Gastrocnemius medialis (tissue), 4 donors: ENCODE measurements at regions of chr18 and their contacts with region 1.

Region 1: GRCh38 chr18:37537868-37538525 is 27.6 kb downstream of the CELF4 start:
- DNase-seq: peak; percentile 15 to 36
- ATAC-seq: peak in 1 of 2 donors; percentile 71
- H3K4me3 ChIP-seq: no peak overlapping the region
- H3K27ac ChIP-seq: no peak overlapping the region
- H3K4me1 ChIP-seq: peaks cover 0 to 4% of the 10 kb centered on the region in 2 donors
- H3K27me3 ChIP-seq: peaks cover 12 to 18% (median 13%) of the 10 kb centered on the region in 3 donors
- CTCF ChIP-seq: peak; percentile 37 to 83 (median 68)
- POLR2A ChIP-seq: no peak

Region 2: GRCh38 chr18:37335409-37335736 is 202.6 kb before region 1 on chr18:
- in situ Hi-C with region 1: loop called in 1 of 4 experiments (anchors 25 kb)
- intact Hi-C with region 1: loop called (anchors 5 kb)
- DNase-seq: no peak
- ATAC-seq: no peak
- H3K4me3 ChIP-seq: no peak overlapping the region
- H3K27ac ChIP-seq: no peak overlapping the region
- H3K4me1 ChIP-seq: no peaks in the 10 kb centered on the region
- H3K27me3 ChIP-seq: no peaks in the 10 kb centered on the region
- CTCF ChIP-seq: no peak
- POLR2A ChIP-seq: no peak

Region 3: DNA sequence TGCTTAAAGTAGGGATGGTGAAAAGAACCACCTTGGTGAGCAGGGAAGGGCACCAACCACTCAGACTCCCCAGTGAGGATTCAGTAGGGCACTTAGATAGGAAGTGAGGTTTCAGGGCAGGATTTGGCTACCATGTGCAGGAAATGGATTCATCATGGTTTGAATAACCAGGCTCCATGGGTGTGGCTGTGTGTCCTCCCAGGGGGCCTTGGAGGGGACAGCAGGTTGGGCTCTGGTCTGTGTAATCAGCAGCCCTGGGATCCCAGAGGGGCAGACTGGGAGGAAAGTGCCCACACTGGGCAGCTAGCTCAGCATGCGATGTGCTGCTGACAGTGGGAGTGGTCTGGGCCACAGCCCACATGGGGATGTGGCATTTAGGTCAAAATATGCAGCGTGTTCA is 197.0 kb before region 1 on chr18:
- in situ Hi-C with region 1: loop called in 1 of 4 experiments (anchors 25 kb)
- intact Hi-C with region 1: loop called (anchors 5 kb)
- DNase-seq: no peak
- ATAC-seq: no peak
- H3K4me3 ChIP-seq: no peak overlapping the region
- H3K27ac ChIP-seq: no peak overlapping the region
- H3K4me1 ChIP-seq: no peaks in the 10 kb centered on the region
- H3K27me3 ChIP-seq: peaks cover 2 to 6% (median 5%) of the 10 kb centered on the region in 3 donors
- CTCF ChIP-seq: no peak
- POLR2A ChIP-seq: no peak

Region 4: DNA sequence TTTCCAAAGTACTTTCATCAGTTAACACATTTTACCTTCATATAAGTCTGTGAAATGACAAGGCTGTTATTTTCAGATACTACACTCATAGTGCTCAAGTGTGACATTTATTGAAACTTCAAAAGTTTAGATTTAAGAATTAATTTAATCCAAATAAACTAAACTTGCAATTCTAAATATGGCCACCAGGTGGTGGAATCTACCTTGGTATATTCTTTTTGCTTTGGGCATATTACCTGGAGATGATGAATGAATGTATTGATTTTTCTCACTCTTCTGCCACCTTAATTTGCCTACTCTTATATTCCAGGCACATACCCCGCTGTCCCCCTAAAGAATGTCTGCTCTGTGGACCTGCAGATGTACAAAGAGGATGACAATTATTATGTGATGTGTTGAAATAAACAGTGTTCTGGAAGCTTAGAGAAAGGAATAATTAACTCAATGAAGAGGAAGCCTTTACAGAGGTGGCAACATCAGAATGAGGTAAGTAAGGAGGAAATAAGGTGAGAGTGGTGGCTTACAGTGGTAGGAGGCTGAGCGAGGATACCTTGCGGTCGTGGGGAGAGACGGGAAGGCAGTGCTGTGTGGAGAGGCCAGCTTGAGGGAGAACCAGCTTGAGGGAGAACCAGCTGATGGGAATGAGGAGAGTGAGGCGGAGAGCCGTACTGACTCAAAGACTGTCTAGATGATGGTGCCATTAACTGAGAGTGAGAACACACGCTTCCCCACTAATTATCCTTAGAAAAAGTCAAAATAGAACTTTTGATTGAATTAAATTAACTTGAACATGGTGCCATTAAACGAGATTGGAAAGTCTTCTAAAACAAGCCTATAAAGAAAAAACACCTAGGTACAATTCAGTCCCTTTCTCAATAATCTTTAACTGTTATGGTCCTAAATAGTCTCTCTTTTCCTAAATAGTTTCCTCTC is 151.9 kb before region 1 on chr18:
- in situ Hi-C with region 1: no loop called
- intact Hi-C with region 1: loop called (anchors 1 kb)
- DNase-seq: no peak
- ATAC-seq: no peak
- H3K4me3 ChIP-seq: no peak overlapping the region
- H3K27ac ChIP-seq: no peak overlapping the region
- H3K4me1 ChIP-seq: no peaks in the 10 kb centered on the region
- H3K27me3 ChIP-seq: peaks cover 0 to 4% (median 0%) of the 10 kb centered on the region in 3 donors
- CTCF ChIP-seq: peak; percentile 35 to 64 (median 42)
- POLR2A ChIP-seq: no peak

Region 5: GRCh38 chr18:37445368-37445767 is 92.6 kb before region 1 on chr18:
- in situ Hi-C with region 1: no loop called
- intact Hi-C with region 1: loop called (anchors 2 kb)
- DNase-seq: no peak
- ATAC-seq: no peak
- H3K4me3 ChIP-seq: no peak overlapping the region
- H3K27ac ChIP-seq: no peak overlapping the region
- H3K4me1 ChIP-seq: no peaks in the 10 kb centered on the region
- H3K27me3 ChIP-seq: peaks cover 0 to 4% (median 2%) of the 10 kb centered on the region in 3 donors
- CTCF ChIP-seq: no peak
- POLR2A ChIP-seq: no peak

Region 6: GRCh38 chr18:38909972-38910371 is 1372.0 kb after region 1 on chr18:
- in situ Hi-C with region 1: no loop called
- intact Hi-C with region 1: no loop called
- DNase-seq: no peak
- ATAC-seq: no peak
- H3K4me3 ChIP-seq: no peak overlapping the region
- H3K27ac ChIP-seq: no peak overlapping the region
- H3K4me1 ChIP-seq: no peaks in the 10 kb centered on the region
- H3K27me3 ChIP-seq: no peaks in the 10 kb centered on the region
- CTCF ChIP-seq: no peak
- POLR2A ChIP-seq: no peak